Head of caudate nucleus (tissue), 42 donors: ENCODE measurements at regions of chr13 and their contacts with region 1.

Region 1: GRCh38 chr13:77779552-77780272 is 82.2 kb downstream of the SLAIN1 start:
- DNase-seq: peak in 17 of 42 donors; percentile 8 to 72 (median 44)

Region 2: GRCh38 chr13:78067290-78067689 is 287.6 kb after region 1 on chr13:
- intact Hi-C with region 1: no loop called
- DNase-seq: no peak

Region 3: GRCh38 chr13:78121459-78122348 is 342.0 kb after region 1 on chr13:
- intact Hi-C with region 1: loop called (anchors 5 kb)
- DNase-seq: peak in 40 of 42 donors; percentile 29 to 88 (median 64)